MCF 10A (cell line): ENCODE measurements at regions of chr11 and their contacts with region 1.

Region 1: GRCh38 chr11:119728651-119729580 is at the start of gene NECTIN1:
- DNase-seq: peak; percentile 83
- H3K4me3 Mint-ChIP-seq: peak within 1 kb of the TSS; percentile 81
- H3K27ac Mint-ChIP-seq: peak within 1 kb of the TSS; percentile 69
- H3K4me1 Mint-ChIP-seq: peaks cover 16% of the 10 kb centered on the region
- H3K27me3 Mint-ChIP-seq: no peaks in the 10 kb centered on the region
- CTCF ChIP-seq: peak; percentile 96
- total RNA-seq, gene NECTIN1: 59.2 and 78.6 TPM in 2 replicates

Region 2: DNA sequence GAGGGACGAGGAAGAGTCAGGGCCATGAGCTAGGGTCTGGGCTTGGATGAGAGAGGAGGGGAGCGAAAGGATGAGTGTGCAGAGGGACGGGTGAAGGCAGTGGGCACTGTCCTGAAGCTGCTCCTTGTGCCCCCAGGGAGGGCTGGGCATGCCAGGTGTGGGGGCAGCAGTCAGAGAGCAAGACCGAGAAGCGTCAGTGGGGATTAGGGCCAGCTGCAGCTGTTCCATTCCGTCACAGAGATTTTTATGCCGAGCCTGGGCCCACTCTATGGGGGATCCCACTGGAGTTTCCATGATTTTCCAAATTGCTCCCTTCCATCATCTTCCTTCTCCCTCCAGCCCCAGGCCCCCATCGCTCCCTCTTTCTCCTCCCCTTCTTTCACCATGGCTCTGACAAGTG is 93.1 kb before region 1 on chr11:
- CTCF ChIA-PET with region 1: no interaction called
- POLR2A ChIA-PET with region 1: no interaction called
- intact Hi-C with region 1: no loop called
- DNase-seq: no peak
- H3K4me3 Mint-ChIP-seq: no peak overlapping the region
- H3K27ac Mint-ChIP-seq: no peak overlapping the region
- H3K4me1 Mint-ChIP-seq: no peaks in the 10 kb centered on the region
- H3K27me3 Mint-ChIP-seq: peaks cover 20% of the 10 kb centered on the region
- CTCF ChIP-seq: no peak

Region 3: DNA sequence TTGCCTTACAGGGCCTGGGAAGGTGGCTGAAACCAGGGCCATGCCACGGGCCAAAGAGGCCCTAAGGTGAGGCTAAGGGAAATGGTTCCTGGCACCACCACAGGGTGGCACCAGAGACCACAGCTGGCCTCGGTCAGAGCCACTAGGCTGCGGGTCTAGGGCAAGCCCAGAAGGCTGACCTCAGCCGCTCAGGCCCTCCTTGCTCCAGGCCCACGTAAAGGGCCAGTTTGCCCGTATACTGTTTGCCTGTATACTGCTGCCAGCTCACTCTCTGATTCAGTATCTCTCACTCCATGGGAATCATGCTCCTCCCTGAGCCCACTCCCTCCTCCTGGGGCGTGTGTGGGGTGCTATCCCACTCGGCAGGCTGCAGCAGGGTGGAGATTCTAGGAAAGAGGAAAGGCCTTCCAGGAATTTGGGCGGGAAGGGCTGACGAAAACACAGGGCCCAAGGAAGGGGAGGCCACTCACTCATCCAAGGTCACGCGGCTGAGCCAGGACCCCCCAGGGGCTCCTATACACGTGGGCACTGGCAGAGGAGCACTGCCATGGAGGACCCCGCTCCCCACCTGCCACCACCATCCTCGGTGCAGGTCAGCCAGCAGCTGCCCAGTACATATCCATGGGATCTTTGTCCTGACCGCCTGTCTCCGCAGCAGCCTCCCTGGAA is 62.3 kb before region 1 on chr11:
- CTCF ChIA-PET with region 1: interaction called, 26 read pairs
- POLR2A ChIA-PET with region 1: interaction called, 4 read pairs
- intact Hi-C with region 1: loop called (anchors 1 kb)
- DNase-seq: peak; percentile 78
- H3K4me3 Mint-ChIP-seq: no peak overlapping the region
- H3K27ac Mint-ChIP-seq: no peak overlapping the region
- H3K4me1 Mint-ChIP-seq: peaks cover 14% of the 10 kb centered on the region
- H3K27me3 Mint-ChIP-seq: no peaks in the 10 kb centered on the region
- CTCF ChIP-seq: peak; percentile 98

Region 4: DNA sequence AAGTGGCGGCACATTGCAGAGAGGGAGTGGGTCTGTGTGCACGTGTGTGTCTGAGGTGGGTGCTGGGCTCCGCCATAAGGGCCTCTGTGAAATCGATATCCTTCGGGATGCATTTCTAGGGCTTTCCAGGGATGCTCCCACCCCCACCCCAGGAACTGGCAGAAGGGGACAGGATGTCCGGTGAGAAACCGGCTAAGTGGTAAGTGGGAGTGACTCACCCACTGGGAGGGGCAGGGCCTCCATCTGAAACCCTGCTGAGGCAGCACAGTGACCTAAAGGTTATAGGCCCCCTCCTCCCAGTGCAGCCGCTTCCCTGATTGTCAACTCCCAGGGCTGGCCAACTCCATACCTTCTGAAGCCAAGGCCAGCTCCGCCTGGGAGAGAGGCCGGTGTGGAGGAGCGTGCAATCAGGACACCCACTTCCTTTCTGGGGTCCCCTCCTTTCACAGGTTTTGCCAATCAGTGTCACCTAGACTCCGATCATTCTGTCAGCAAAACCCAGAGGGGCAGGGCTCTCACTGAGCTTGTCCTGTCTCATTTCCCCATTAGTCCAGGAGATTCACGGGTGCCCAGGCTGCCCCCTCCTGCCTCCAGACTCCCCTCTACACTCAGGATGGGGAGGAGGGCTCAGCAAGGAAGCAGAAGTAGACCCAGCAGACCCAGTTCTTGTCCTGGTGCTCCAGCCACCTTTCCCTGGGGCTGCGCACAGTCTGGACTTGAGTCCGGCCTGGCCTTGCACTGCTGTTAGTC is 44.4 kb before region 1 on chr11:
- CTCF ChIA-PET with region 1: interaction called, 56 read pairs
- POLR2A ChIA-PET with region 1: interaction called, 23 read pairs
- intact Hi-C with region 1: loop called (anchors 1 kb)
- DNase-seq: peak; percentile 86
- H3K4me3 Mint-ChIP-seq: no peak overlapping the region
- H3K27ac Mint-ChIP-seq: peak overlapping the region; percentile 63
- H3K4me1 Mint-ChIP-seq: peaks cover 24% of the 10 kb centered on the region
- H3K27me3 Mint-ChIP-seq: no peaks in the 10 kb centered on the region
- CTCF ChIP-seq: no peak

Region 5: GRCh38 chr11:119701591-119702549 is 27.0 kb before region 1 on chr11:
- CTCF ChIA-PET with region 1: interaction called, 36 read pairs
- POLR2A ChIA-PET with region 1: interaction called, 38 read pairs
- intact Hi-C with region 1: no loop called
- DNase-seq: no peak
- H3K4me3 Mint-ChIP-seq: no peak overlapping the region
- H3K27ac Mint-ChIP-seq: peak overlapping the region; percentile 88
- H3K4me1 Mint-ChIP-seq: peaks cover 39% of the 10 kb centered on the region
- H3K27me3 Mint-ChIP-seq: no peaks in the 10 kb centered on the region
- CTCF ChIP-seq: no peak

Region 6: GRCh38 chr11:120013325-120014270 is 284.7 kb after region 1 on chr11:
- CTCF ChIA-PET with region 1: interaction called, 5 read pairs
- POLR2A ChIA-PET with region 1: no interaction called
- intact Hi-C with region 1: loop called (anchors 5 kb)
- DNase-seq: peak; percentile 53
- H3K4me3 Mint-ChIP-seq: no peak overlapping the region
- H3K27ac Mint-ChIP-seq: no peak overlapping the region
- H3K4me1 Mint-ChIP-seq: no peaks in the 10 kb centered on the region
- H3K27me3 Mint-ChIP-seq: peaks cover 76% of the 10 kb centered on the region
- CTCF ChIP-seq: peak; percentile 79